Vagina (tissue), 2 donors: ENCODE measurements at regions of chr4 and their contacts with region 1.

Region 1: GRCh38 chr4:70839589-70840093 is at the start of gene GRSF1:
- DNase-seq: no peak
- H3K4me3 ChIP-seq: peak within 1 kb of the TSS; percentile 60 to 98
- H3K27ac ChIP-seq: peak within 1 kb of the TSS; percentile 87
- H3K4me1 ChIP-seq: peaks cover 32% of the 10 kb centered on the region
- H3K27me3 ChIP-seq: no peaks in the 10 kb centered on the region
- CTCF ChIP-seq: no peak
- POLR2A ChIP-seq: peak in 1 of 2 donors; percentile 31
- total RNA-seq, gene GRSF1: 35.1 TPM

Region 2: GRCh38 chr4:70993181-70994068 is 153.8 kb after region 1 on chr4 and contains the start of gene DCK:
- intact Hi-C with region 1: loop called (anchors 10 kb)
- DNase-seq: peak in 1 of 2 donors; percentile 91
- H3K4me3 ChIP-seq: peak within 1 kb of the TSS; percentile 76 to 81
- H3K27ac ChIP-seq: peak within 1 kb of the TSS; percentile 83
- H3K4me1 ChIP-seq: peaks cover 41% of the 10 kb centered on the region
- H3K27me3 ChIP-seq: no peaks in the 10 kb centered on the region
- CTCF ChIP-seq: no peak
- POLR2A ChIP-seq: peak in 1 of 2 donors; percentile 69
- total RNA-seq, gene DCK: 10.3 TPM